IMR-90 (cell line): ENCODE measurements at regions of chr3 and their contacts with region 1.

Region 1: GRCh38 chr3:141561426-141562034 is 74.7 kb downstream of the RASA2 start:
- DNase-seq: peak; percentile 80
- ATAC-seq: peak; percentile 77
- H3K4me3 ChIP-seq: no peak overlapping the region
- H3K27ac ChIP-seq: no peak overlapping the region
- H3K4me1 ChIP-seq: no peaks in the 10 kb centered on the region; the same call in 1 of the 2 replicates
- H3K27me3 ChIP-seq: no peaks in the 10 kb centered on the region
- CTCF ChIP-seq: peak; percentile 99
- POLR2A ChIP-seq: 0 out of 2 replicates have a peak, but pooled peaks have one; percentile 45
- RAD21 ChIP-seq: peak; percentile 98

Region 2: DNA sequence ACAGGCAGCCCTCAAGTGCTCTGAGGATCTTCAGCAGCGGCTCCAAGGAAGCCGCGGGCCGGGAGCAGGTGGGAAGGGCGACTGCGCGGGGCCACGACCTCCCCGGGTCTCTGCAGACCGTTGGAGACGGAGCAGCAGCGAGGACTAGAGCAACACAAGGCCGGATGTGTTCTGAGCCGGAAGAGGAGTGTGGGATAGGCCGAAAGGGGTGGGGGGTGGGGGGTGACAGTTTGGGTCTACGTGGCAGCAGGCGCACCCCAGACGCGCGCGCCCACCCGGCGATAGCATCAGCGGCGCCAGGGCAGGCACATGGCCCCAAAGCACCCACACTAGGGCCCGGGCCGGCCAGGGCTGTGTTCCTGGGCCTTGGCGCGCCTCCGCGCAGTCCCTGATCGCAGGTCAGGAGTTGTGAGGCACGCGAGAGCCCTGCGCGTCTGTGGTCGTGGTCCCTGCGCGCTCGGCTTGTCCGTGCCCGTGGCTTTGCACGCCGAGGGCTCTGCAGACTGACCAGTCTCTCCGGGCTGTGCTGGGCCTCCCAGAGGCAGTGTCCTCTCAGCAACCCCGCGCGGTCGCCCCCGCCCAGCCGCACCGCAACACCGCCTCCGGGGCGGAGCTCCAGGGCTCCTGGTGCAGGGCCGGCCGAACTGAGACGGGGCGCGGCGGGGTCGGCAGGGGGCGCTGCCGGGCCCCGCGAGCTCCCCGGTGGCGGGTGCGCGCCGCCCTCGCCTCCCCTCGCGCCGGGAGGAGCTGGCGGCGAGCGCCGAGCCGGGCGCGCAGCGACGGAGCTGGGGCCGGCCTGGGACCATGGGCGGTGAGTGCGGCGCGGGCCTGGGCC is 330.2 kb before region 1 on chr3 and contains the start of gene PXYLP1:
- CTCF ChIA-PET with region 1: interaction called, 3 read pairs
- POLR2A ChIA-PET with region 1: no interaction called
- dilution Hi-C with region 1: no loop called
- in situ Hi-C with region 1: no loop called
- intact Hi-C with region 1: loop called (anchors 5 kb)
- DNase-seq: peak; percentile 85
- ATAC-seq: peak; percentile 98
- H3K4me3 ChIP-seq: peak within 1 kb of the TSS; percentile 71
- H3K27ac ChIP-seq: peak within 1 kb of the TSS; percentile 61
- H3K4me1 ChIP-seq: peaks cover 5% of the 10 kb centered on the region; the same call in 1 of the 2 replicates
- H3K27me3 ChIP-seq: peaks cover 3% of the 10 kb centered on the region; the same call in 1 of the 2 replicates
- CTCF ChIP-seq: peak; percentile 95
- POLR2A ChIP-seq: peak; percentile 82
- RAD21 ChIP-seq: peak; percentile 70
- total RNA-seq, gene PXYLP1: 13.3 and 15.6 TPM in 2 replicates

Region 3: DNA sequence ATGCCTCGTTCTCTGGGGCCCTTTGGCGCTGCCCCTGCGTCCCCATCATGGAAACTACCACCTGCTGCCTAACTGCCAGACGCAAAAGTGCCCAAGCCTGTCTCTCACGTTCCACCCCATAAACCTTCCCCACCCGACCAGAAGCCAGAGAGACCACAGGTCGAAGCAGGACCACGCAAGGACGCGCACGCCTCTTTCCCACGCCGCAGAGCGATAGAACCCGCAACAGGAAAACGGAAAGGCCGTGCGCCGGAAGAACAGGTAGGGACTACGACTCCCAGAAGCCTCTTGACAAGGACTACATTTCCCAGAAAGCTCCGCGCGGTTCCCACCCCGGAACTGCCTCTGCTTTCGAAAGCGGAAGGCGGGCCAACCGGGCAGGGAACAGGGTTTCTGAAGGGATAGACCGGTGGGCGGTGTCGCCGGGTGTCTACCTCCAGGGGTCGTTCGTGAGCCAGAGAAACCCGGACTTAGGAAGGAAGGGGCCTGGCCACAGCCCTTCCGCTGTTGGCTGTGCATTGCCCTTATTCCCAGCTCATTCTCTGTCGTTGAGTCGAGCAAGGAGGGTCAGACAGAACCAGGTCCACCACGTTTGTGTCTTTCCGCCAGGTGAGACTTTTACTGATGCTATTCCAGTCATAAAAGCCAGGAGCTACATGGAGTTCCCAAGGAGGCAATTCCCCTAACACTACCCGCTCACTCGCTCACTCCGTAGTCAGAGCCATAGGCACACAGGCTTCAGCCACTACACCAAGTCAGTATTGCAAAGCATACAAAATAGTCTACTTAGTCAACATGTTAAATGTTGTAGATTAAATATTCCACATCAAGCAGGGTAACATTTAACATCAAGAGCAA is 249.8 kb before region 1 on chr3:
- CTCF ChIA-PET with region 1: interaction called, 7 read pairs
- POLR2A ChIA-PET with region 1: no interaction called
- dilution Hi-C with region 1: no loop called
- in situ Hi-C with region 1: no loop called
- intact Hi-C with region 1: loop called (anchors 2 kb)
- DNase-seq: peak; percentile 98
- ATAC-seq: peak; percentile 97
- H3K4me3 ChIP-seq: peak overlapping the region; percentile 74
- H3K27ac ChIP-seq: peak overlapping the region; percentile 75
- H3K4me1 ChIP-seq: peaks cover 4% of the 10 kb centered on the region; the same call in 1 of the 2 replicates
- H3K27me3 ChIP-seq: no peaks in the 10 kb centered on the region
- CTCF ChIP-seq: peak; percentile 90
- POLR2A ChIP-seq: peak; percentile 33
- RAD21 ChIP-seq: peak; percentile 92

Region 4: DNA sequence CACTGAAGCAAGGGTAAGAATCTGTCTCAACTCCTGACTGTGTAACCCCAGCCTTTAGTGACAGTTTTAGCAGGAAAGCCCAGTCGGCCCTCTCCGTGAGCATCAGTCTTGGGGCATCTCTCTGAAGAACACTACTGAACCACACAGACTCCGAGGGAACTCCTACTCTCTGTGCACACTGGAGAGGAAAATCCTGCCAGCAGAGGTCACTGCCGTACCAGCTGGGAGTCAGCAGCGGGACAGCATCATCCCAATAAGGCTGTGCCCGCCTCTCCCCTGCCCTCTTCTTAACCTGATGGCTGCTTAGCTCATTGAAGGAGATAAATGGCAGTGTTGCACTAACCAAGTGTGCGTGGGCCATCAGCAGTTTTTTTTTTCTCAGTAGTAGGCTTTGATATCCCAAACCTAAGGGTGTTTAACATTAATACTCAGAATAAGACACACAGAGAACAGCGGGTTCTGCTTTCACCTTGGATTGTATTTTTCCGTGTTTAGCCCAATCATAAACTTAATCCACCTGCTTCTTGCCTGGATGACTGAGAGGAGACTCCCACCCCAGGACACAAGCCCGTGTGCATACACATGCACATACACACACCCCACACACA is 101.3 kb before region 1 on chr3:
- CTCF ChIA-PET with region 1: interaction called, 41 read pairs
- POLR2A ChIA-PET with region 1: no interaction called
- dilution Hi-C with region 1: no loop called
- in situ Hi-C with region 1: loop called (anchors 5 kb)
- intact Hi-C with region 1: loop called (anchors 1 kb)
- DNase-seq: peak; percentile 85
- ATAC-seq: peak; percentile 91
- H3K4me3 ChIP-seq: no peak overlapping the region
- H3K27ac ChIP-seq: no peak overlapping the region
- H3K4me1 ChIP-seq: peaks cover 12% of the 10 kb centered on the region
- H3K27me3 ChIP-seq: no peaks in the 10 kb centered on the region
- CTCF ChIP-seq: peak; percentile 98
- POLR2A ChIP-seq: no peak
- RAD21 ChIP-seq: peak; percentile 97

Region 5: GRCh38 chr3:141477224-141477623 is 84.3 kb before region 1 on chr3:
- CTCF ChIA-PET with region 1: interaction called, 3 read pairs
- POLR2A ChIA-PET with region 1: no interaction called
- dilution Hi-C with region 1: no loop called
- in situ Hi-C with region 1: no loop called
- intact Hi-C with region 1: loop called (anchors 1 kb)
- DNase-seq: peak; percentile 94
- ATAC-seq: peak; percentile 85
- H3K4me3 ChIP-seq: no peak overlapping the region
- H3K27ac ChIP-seq: no peak overlapping the region
- H3K4me1 ChIP-seq: no peaks in the 10 kb centered on the region
- H3K27me3 ChIP-seq: no peaks in the 10 kb centered on the region
- CTCF ChIP-seq: no peak
- POLR2A ChIP-seq: no peak
- RAD21 ChIP-seq: no peak